ENCODE measurements at regions of chr1 and their contacts with region 1.

Region 1: DNA sequence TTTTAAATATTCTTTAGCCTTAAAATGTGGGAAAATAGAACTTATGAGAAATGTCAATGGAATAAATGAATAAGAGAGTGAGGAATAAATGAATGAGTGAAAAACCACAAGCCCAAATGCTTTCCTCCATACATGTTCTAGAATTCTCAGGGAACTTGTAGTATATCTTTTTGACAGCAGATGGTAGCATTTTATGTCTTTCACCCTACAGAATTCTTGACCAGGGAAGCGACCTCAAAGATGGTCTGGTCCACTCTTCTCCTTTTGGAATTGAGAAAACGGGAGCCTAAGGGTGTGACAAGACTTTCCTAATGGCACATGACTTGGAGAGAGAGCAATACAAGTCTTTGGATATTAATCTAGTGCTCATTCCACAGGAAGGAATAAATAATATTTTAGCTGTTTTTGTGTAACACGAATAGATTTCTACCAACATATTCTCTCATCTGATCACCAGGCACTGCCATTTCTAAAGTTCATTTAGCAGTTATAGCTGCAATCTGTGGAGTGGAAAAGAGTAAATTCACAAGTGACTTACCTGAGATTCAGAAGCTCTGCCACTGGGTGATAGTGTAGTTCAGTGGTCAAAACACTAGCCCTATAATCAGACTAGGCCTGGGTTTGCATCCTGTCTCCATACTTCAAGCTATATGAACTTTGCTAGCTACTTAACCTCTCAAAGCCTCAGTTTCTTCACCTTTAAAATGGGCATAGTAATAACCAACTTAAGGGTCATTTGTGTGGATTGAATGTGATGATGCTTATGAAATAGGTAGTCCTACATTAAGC is 15.0 kb upstream of the F5 start:
- DNase-seq: no peak
- ATAC-seq: peak; percentile 53
- H3K4me3 Mint-ChIP-seq: peak overlapping the region; percentile 42
- H3K27ac Mint-ChIP-seq: peak overlapping the region; percentile 71
- H3K4me1 Mint-ChIP-seq: peaks cover 44% of the 10 kb centered on the region
- H3K27me3 Mint-ChIP-seq: no peaks in the 10 kb centered on the region
- CTCF ChIP-seq: no peak

Region 2: GRCh38 chr1:169586395-169587255 is 14.7 kb before region 1 on chr1 and contains the start of gene F5:
- CTCF ChIA-PET with region 1: interaction called, 21 read pairs
- POLR2A ChIA-PET with region 1: interaction called, 5 read pairs
- intact Hi-C with region 1: loop called (anchors 1 kb)
- DNase-seq: peak; percentile 40
- ATAC-seq: peak; percentile 98
- H3K4me3 Mint-ChIP-seq: peak within 1 kb of the TSS; percentile 66
- H3K27ac Mint-ChIP-seq: no peak within 1 kb of the TSS
- H3K4me1 Mint-ChIP-seq: peaks cover 7% of the 10 kb centered on the region
- H3K27me3 Mint-ChIP-seq: peaks cover 18% of the 10 kb centered on the region
- CTCF ChIP-seq: no peak
- total RNA-seq, gene F5: 0.66 and 0.67 TPM in 2 replicates

Region 3: GRCh38 chr1:169680377-169681019 is 79.2 kb after region 1 on chr1:
- CTCF ChIA-PET with region 1: interaction called, 45 read pairs
- POLR2A ChIA-PET with region 1: interaction called, 11 read pairs
- intact Hi-C with region 1: no loop called
- DNase-seq: no peak
- ATAC-seq: peak; percentile 84
- H3K4me3 Mint-ChIP-seq: peak overlapping the region; percentile 57
- H3K27ac Mint-ChIP-seq: peak overlapping the region; percentile 91
- H3K4me1 Mint-ChIP-seq: peaks cover 65% of the 10 kb centered on the region
- H3K27me3 Mint-ChIP-seq: no peaks in the 10 kb centered on the region
- CTCF ChIP-seq: no peak

Region 4: GRCh38 chr1:169794530-169795416 is 193.5 kb after region 1 on chr1 and contains the start of gene METTL18:
- CTCF ChIA-PET with region 1: interaction called, 7 read pairs
- POLR2A ChIA-PET with region 1: interaction called, 13 read pairs
- intact Hi-C with region 1: loop called (anchors 1 kb)
- DNase-seq: peak; percentile 77
- ATAC-seq: peak; percentile 98
- H3K4me3 Mint-ChIP-seq: peak within 1 kb of the TSS; percentile 100
- H3K27ac Mint-ChIP-seq: peak within 1 kb of the TSS; percentile 99
- H3K4me1 Mint-ChIP-seq: peaks cover 50% of the 10 kb centered on the region
- H3K27me3 Mint-ChIP-seq: no peaks in the 10 kb centered on the region
- CTCF ChIP-seq: no peak
- total RNA-seq, gene METTL18: 12.0 and 14.5 TPM in 2 replicates

Region 5: DNA sequence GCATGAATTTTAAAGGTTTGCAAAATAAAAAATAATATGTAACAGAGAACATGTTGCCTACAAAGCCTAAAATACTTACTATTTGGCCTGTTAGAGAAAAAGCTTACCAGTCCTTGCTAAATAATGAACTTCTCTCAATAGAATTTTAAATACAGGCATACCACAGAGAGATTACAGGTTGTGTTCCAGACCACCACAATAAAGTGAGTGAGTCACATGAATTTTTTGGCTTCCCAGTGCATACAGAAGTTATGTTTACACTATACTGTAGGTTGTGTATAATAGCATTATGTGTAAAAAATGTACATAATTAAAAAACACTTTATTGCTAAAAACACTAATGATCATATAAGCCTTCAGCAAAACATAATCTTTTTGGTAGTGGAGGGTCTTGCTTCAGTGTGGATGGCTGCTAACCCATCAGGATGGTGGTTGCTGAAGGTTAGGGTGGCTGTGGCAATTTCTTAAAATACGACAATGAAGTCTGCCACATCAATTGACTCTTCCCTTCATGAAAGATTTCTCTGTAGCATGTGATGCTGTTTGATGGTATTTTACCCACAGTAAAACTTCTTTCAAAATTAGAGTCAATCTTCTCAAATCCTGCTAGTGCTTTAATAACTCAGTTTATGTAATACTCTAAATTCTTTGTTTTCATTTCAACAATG is 243.8 kb after region 1 on chr1:
- CTCF ChIA-PET with region 1: no interaction called
- POLR2A ChIA-PET with region 1: no interaction called
- intact Hi-C with region 1: no loop called
- DNase-seq: no peak
- ATAC-seq: no peak
- H3K4me3 Mint-ChIP-seq: no peak overlapping the region
- H3K27ac Mint-ChIP-seq: no peak overlapping the region
- H3K4me1 Mint-ChIP-seq: no peaks in the 10 kb centered on the region
- H3K27me3 Mint-ChIP-seq: no peaks in the 10 kb centered on the region
- CTCF ChIP-seq: no peak

Measured in activated B cell treated with CpG ODN at 0.5 μM for 24 hours (primary cell).